Breast epithelium (tissue), 4 donors: ENCODE measurements at regions of chr1 and their contacts with region 1.

Region 1: DNA sequence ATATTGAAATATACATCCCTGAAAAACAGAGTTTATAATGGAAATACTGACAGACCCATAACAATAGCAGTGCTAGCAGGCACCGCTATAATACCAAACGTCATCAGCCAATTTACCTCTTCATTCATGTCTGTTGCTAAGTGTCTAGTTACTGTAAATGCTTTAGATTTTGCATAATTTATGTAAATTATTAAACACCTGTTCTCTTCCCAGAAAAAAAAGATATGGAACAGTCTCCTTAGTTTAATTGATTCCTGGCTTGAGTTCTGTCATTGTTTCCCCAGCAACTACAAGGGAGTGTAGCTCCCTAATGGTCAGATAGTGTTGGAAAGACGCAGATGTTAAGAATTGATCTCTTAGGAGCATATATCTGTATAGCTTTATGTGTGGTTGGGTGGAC is 817.9 kb upstream of the ADGRL2 start:
- DNase-seq: no peak
- H3K4me3 ChIP-seq: no peak overlapping the region
- H3K27ac ChIP-seq: no peak overlapping the region
- H3K4me1 ChIP-seq: no peaks in the 10 kb centered on the region
- H3K27me3 ChIP-seq: no peaks in the 10 kb centered on the region
- CTCF ChIP-seq: no peak
- POLR2A ChIP-seq: no peak

Region 2: DNA sequence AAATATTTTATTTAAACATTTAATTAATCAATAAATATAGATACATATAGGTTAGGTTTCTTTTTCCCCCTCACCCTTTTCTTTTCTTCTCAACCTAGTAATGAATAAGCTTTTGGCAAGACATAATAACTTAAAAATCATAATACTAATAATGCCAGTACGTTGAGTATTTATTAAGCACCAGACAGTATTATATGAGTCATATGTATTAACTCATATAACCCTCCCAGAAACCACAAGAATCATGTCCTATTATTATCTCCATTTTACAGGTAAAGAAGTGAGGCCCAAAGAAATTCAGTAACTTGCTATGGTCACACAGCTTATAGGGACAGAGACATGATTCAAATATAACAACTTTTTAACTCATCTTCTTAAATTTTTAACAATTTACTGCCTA is 16.6 kb before region 1 on chr1:
- intact Hi-C with region 1: loop called (anchors 1 kb)
- DNase-seq: no peak
- H3K4me3 ChIP-seq: no peak overlapping the region
- H3K27ac ChIP-seq: no peak overlapping the region
- H3K4me1 ChIP-seq: no peaks in the 10 kb centered on the region
- H3K27me3 ChIP-seq: no peaks in the 10 kb centered on the region
- CTCF ChIP-seq: no peak
- POLR2A ChIP-seq: no peak